PC-3 (cell line): ENCODE measurements at regions of chr5 and their contacts with region 1.

Region 1: GRCh38 chr5:127820910-127821553 is 117.8 kb downstream of the CCDC192 start:
- DNase-seq: peak; percentile 92
- ATAC-seq: peak; percentile 98
- H3K4me3 ChIP-seq: no peak overlapping the region
- H3K27ac ChIP-seq: peak overlapping the region; percentile 32
- H3K4me1 ChIP-seq: peaks cover 11% of the 10 kb centered on the region
- H3K27me3 ChIP-seq: no peaks in the 10 kb centered on the region
- CTCF ChIP-seq: no peak

Region 2: GRCh38 chr5:127785098-127785927 is 35.7 kb before region 1 on chr5:
- CTCF ChIA-PET with region 1: no interaction called
- POLR2A ChIA-PET with region 1: interaction called, 4 read pairs
- intact Hi-C with region 1: loop called (anchors 5 kb)
- DNase-seq: peak; percentile 95
- ATAC-seq: peak; percentile 99
- H3K4me3 ChIP-seq: no peak overlapping the region
- H3K27ac ChIP-seq: no peak overlapping the region
- H3K4me1 ChIP-seq: peaks cover 14% of the 10 kb centered on the region
- H3K27me3 ChIP-seq: no peaks in the 10 kb centered on the region
- CTCF ChIP-seq: no peak